Heart right ventricle (tissue), 16 donors: ENCODE measurements at regions of chr18 and their contacts with region 1.

Region 1: GRCh38 chr18:71471963-71472725 is 1072.0 kb downstream of the CBLN2 start:
- DNase-seq: no peak
- ATAC-seq: no peak
- H3K4me3 ChIP-seq: no peak overlapping the region
- H3K27ac ChIP-seq: no peak overlapping the region
- H3K4me1 ChIP-seq: no peaks in the 10 kb centered on the region
- H3K27me3 ChIP-seq: no peaks in the 10 kb centered on the region
- CTCF ChIP-seq: no peak

Region 2: GRCh38 chr18:71287268-71287667 is 184.9 kb before region 1 on chr18:
- intact Hi-C with region 1: loop called in 1 of 10 experiments (anchors 10 kb)
- DNase-seq: no peak
- ATAC-seq: no peak
- H3K4me3 ChIP-seq: no peak overlapping the region
- H3K27ac ChIP-seq: no peak overlapping the region
- H3K4me1 ChIP-seq: no peaks in the 10 kb centered on the region
- H3K27me3 ChIP-seq: no peaks in the 10 kb centered on the region
- CTCF ChIP-seq: no peak